GM12878 (cell line): ENCODE measurements at regions of chr17 and their contacts with region 1.

Region 1: DNA sequence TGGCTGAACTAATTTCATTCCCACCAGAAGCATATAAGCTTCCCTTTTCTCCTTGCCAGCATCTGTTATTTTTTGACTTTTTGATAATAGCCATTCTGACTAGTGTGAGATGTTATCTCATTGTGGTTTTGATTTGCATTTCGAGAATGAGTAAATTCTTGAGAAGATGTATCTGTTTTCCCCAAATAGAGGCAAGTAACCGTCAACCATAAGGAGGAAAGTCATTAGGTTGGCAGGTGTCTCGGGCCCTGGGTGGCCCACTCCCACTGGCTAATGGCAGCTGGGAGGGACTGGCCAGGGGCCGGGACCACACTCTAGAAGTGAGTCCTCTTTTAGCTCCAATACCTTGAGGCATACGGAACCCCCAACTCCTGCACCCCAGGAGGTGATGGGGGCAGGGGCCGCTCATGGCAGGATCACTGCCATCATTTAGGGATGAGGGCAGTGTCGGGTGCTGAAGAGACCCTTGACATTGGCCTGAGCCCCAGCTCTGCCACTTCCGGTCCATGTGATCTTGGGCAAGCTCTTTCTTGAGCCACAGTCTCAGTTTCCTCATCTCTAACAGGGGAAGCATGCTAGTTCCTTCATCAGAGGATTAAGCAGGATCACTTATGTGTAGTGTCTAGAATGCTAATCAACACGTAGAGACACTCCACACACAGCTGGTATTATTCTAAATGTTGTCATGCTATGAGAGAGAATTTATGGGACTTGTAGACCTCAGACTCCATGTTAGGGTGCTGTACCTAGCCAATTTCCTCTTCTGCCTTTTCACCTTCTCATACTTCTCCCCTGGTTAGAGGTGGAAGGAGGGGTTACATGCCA is 44.3 kb downstream of the RGS9 start:
- DNase-seq: peak; percentile 90
- ATAC-seq: peak; percentile 82
- H3K4me3 ChIP-seq: no peak overlapping the region
- H3K27ac ChIP-seq: peak overlapping the region; percentile 99
- H3K4me1 ChIP-seq: peaks cover 49% of the 10 kb centered on the region
- H3K27me3 ChIP-seq: no peaks in the 10 kb centered on the region
- CTCF ChIP-seq: no peak
- EP300 ChIP-seq: peak; percentile 81 to 93; a peak in 3 of 4 replicates
- POLR2A ChIP-seq: 0 out of 2 replicates have a peak, but pooled peaks have one; percentile 11
- RAD21 ChIP-seq: no peak

Region 2: GRCh38 chr17:64975329-64976087 is 205.9 kb before region 1 on chr17:
- CTCF ChIA-PET with region 1: interaction called, 3 read pairs
- POLR2A ChIA-PET with region 1: interaction called, 3 read pairs
- RAD21 ChIA-PET with region 1: interaction called, 5 read pairs
- SMC1A ChIA-PET with region 1: interaction called, 4 read pairs
- in situ Hi-C with region 1: loop called (anchors 5 kb)
- intact Hi-C with region 1: loop called (anchors 5 kb)
- DNase-seq: peak; percentile 95
- ATAC-seq: peak; percentile 87
- H3K4me3 ChIP-seq: peak overlapping the region; percentile 85
- H3K27ac ChIP-seq: peak overlapping the region; percentile 93
- H3K4me1 ChIP-seq: peaks cover 31% of the 10 kb centered on the region
- H3K27me3 ChIP-seq: no peaks in the 10 kb centered on the region
- CTCF ChIP-seq: no peak
- EP300 ChIP-seq: peak; percentile 59 to 64; a peak in 2 of 4 replicates
- POLR2A ChIP-seq: peak; percentile 83
- RAD21 ChIP-seq: no peak

Region 3: DNA sequence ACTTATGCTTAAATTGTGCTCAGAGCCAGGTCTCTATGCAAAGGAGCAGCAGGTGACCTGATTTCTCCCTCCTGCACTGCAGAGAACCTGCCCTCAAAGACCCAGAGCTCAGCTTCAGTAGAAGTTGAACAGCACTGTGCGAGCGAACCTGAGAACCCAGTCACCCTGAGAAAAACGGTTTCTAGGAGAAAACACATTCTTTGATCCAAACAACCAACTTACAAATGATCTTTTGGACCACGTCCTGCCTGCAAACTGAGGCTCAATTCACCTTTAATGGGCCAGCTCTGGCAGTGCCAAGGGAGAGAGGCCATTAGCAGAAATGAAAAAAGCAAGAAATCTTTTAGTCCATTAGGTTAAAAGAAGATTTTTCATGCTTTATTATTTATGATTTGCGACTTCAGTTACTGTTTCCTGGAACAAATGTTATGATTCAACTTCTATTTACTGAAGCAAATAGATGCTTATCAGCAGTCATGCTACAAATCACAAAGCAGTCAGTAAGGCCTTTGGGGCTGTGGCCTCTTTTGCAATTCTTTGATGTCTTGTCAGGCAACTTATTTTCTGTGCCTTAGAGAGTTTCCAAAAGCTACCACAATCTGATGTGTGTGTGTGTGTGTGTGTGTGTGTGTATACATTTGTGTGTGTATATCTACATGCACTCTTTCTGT is 196.5 kb before region 1 on chr17:
- CTCF ChIA-PET with region 1: interaction called, 3 read pairs
- POLR2A ChIA-PET with region 1: interaction called, 9 read pairs
- RAD21 ChIA-PET with region 1: interaction called, 9 read pairs
- SMC1A ChIA-PET with region 1: interaction called, 9 read pairs
- in situ Hi-C with region 1: loop called (anchors 5 kb)
- intact Hi-C with region 1: no loop called
- DNase-seq: no peak
- ATAC-seq: peak; percentile 17
- H3K4me3 ChIP-seq: no peak overlapping the region
- H3K27ac ChIP-seq: peak overlapping the region; percentile 100
- H3K4me1 ChIP-seq: peaks cover 29% of the 10 kb centered on the region
- H3K27me3 ChIP-seq: no peaks in the 10 kb centered on the region
- CTCF ChIP-seq: no peak
- EP300 ChIP-seq: 0 out of 4 replicates have a peak, but pooled peaks of 1 of the 2 experiments have one; percentile 15
- POLR2A ChIP-seq: 0 out of 2 replicates have a peak, but pooled peaks have one; percentile 30
- RAD21 ChIP-seq: no peak

Region 4: GRCh38 chr17:65055348-65056261 is 125.8 kb before region 1 on chr17:
- CTCF ChIA-PET with region 1: no interaction called
- POLR2A ChIA-PET with region 1: no interaction called
- RAD21 ChIA-PET with region 1: interaction called, 3 read pairs
- SMC1A ChIA-PET with region 1: no interaction called
- in situ Hi-C with region 1: no loop called
- intact Hi-C with region 1: loop called (anchors 5 kb)
- DNase-seq: no peak
- ATAC-seq: peak; percentile 65
- H3K4me3 ChIP-seq: peak overlapping the region; percentile 98
- H3K27ac ChIP-seq: peak overlapping the region; percentile 95
- H3K4me1 ChIP-seq: peaks cover 5% of the 10 kb centered on the region; the same call in 1 of the 2 replicates
- H3K27me3 ChIP-seq: no peaks in the 10 kb centered on the region
- CTCF ChIP-seq: no peak
- EP300 ChIP-seq: no peak
- POLR2A ChIP-seq: no peak; the same call in 1 of the 2 replicates
- RAD21 ChIP-seq: no peak

Region 5: GRCh38 chr17:65122836-65123756 is 58.4 kb before region 1 on chr17:
- CTCF ChIA-PET with region 1: no interaction called
- POLR2A ChIA-PET with region 1: interaction called, 5 read pairs
- RAD21 ChIA-PET with region 1: interaction called, 5 read pairs
- SMC1A ChIA-PET with region 1: no interaction called
- in situ Hi-C with region 1: no loop called
- intact Hi-C with region 1: loop called (anchors 2 kb)
- DNase-seq: peak; percentile 66
- ATAC-seq: peak; percentile 77
- H3K4me3 ChIP-seq: peak overlapping the region; percentile 60
- H3K27ac ChIP-seq: peak overlapping the region; percentile 73
- H3K4me1 ChIP-seq: peaks cover 20% of the 10 kb centered on the region
- H3K27me3 ChIP-seq: no peaks in the 10 kb centered on the region
- CTCF ChIP-seq: no peak
- EP300 ChIP-seq: no peak
- POLR2A ChIP-seq: peak; percentile 90
- RAD21 ChIP-seq: no peak

Region 6: GRCh38 chr17:65154770-65155621 is 26.5 kb before region 1 on chr17:
- CTCF ChIA-PET with region 1: interaction called, 17 read pairs
- POLR2A ChIA-PET with region 1: no interaction called
- RAD21 ChIA-PET with region 1: interaction called, 11 read pairs
- SMC1A ChIA-PET with region 1: interaction called, 26 read pairs
- in situ Hi-C with region 1: no loop called
- intact Hi-C with region 1: loop called (anchors 2 kb)
- DNase-seq: no peak
- ATAC-seq: peak; percentile 96
- H3K4me3 ChIP-seq: peak overlapping the region; percentile 9; the same call in 1 of the 2 replicates
- H3K27ac ChIP-seq: peak overlapping the region; percentile 70
- H3K4me1 ChIP-seq: peaks cover 19% of the 10 kb centered on the region
- H3K27me3 ChIP-seq: no peaks in the 10 kb centered on the region
- CTCF ChIP-seq: no peak
- EP300 ChIP-seq: no peak; a peak in 1 of 4 replicates
- POLR2A ChIP-seq: no peak
- RAD21 ChIP-seq: no peak

Region 7: GRCh38 chr17:65191811-65192740 is 10.6 kb after region 1 on chr17:
- CTCF ChIA-PET with region 1: interaction called, 29 read pairs
- POLR2A ChIA-PET with region 1: no interaction called
- RAD21 ChIA-PET with region 1: interaction called, 7 read pairs
- SMC1A ChIA-PET with region 1: interaction called, 19 read pairs
- in situ Hi-C with region 1: no loop called
- intact Hi-C with region 1: no loop called
- DNase-seq: no peak
- ATAC-seq: no peak
- H3K4me3 ChIP-seq: no peak overlapping the region
- H3K27ac ChIP-seq: no peak overlapping the region
- H3K4me1 ChIP-seq: peaks cover 3% of the 10 kb centered on the region; the same call in 1 of the 2 replicates
- H3K27me3 ChIP-seq: no peaks in the 10 kb centered on the region
- CTCF ChIP-seq: no peak
- EP300 ChIP-seq: no peak
- POLR2A ChIP-seq: no peak
- RAD21 ChIP-seq: no peak